ENCODE measurements at regions of chr4 and their contacts with region 1.

Region 1: GRCh38 chr4:26319467-26319948 is 1.3 kb upstream of the RBPJ start:
- DNase-seq: peak; percentile 99
- H3K4me3 ChIP-seq: peak overlapping the region; percentile 68 to 90 (median 86)
- H3K27ac ChIP-seq: peak overlapping the region; percentile 79
- H3K4me1 ChIP-seq: peaks cover 15% of the 10 kb centered on the region
- H3K27me3 ChIP-seq: no peaks in the 10 kb centered on the region
- CTCF ChIP-seq: peak in 1 of 2 donors; percentile 3

Region 2: GRCh38 chr4:25925486-25926201 is 393.9 kb before region 1 on chr4:
- CTCF ChIA-PET with region 1: no interaction called
- dilution Hi-C with region 1: no loop called
- in situ Hi-C with region 1: no loop called
- intact Hi-C with region 1: loop called (anchors 10 kb)
- DNase-seq: peak; percentile 20
- H3K4me3 ChIP-seq: no peak overlapping the region
- H3K27ac ChIP-seq: no peak overlapping the region
- H3K4me1 ChIP-seq: no peaks in the 10 kb centered on the region
- H3K27me3 ChIP-seq: no peaks in the 10 kb centered on the region
- CTCF ChIP-seq: peak; percentile 50 to 66

Region 3: DNA sequence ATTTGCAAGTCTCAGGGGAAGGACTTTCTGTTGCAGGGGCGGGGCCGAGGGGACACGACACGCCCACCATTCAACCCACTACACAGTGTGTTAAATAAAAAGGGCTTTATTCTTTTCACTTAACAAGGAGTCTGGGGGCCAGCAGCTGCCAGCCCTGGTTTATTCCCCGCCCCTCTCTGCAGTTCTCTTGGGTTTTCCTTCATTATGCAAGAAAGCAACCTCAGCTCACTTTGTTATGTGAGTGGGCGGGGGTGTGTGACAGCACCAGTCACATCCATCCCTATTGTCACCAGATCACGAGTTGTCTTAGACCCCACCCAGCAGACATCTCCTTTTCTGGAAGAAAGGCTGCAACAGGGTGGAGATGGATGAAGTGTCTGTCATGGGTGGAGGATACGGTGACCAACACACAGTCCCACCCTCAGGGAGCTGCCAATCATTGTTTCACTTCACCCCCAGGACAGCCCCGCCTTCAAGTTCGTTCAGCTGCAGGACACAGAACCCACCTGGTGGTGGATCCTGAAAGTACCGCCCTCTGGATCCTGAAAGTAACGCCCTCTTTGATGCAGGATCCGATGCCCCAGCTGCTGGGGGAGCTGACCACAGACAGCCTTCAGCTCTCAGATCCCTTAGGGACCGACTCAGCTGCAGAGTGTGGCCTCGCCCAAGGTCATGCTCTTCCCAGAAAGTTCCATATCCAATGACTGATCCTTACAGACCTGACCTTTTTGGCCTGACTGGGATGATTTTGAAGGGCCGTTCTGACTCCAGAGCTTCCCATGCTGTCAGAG is 325.9 kb before region 1 on chr4:
- CTCF ChIA-PET with region 1: no interaction called
- dilution Hi-C with region 1: no loop called
- in situ Hi-C with region 1: loop called in 1 of 2 experiments (anchors 10 kb)
- intact Hi-C with region 1: loop called (anchors 1 kb)
- DNase-seq: no peak
- H3K4me3 ChIP-seq: no peak overlapping the region
- H3K27ac ChIP-seq: no peak overlapping the region
- H3K4me1 ChIP-seq: no peaks in the 10 kb centered on the region
- H3K27me3 ChIP-seq: no peaks in the 10 kb centered on the region
- CTCF ChIP-seq: no peak

Region 4: GRCh38 chr4:26197018-26197779 is 122.3 kb before region 1 on chr4:
- CTCF ChIA-PET with region 1: no interaction called
- dilution Hi-C with region 1: no loop called
- in situ Hi-C with region 1: no loop called
- intact Hi-C with region 1: loop called (anchors 1 kb)
- DNase-seq: peak; percentile 96
- H3K4me3 ChIP-seq: no peak overlapping the region
- H3K27ac ChIP-seq: no peak overlapping the region
- H3K4me1 ChIP-seq: peaks cover 8% of the 10 kb centered on the region
- H3K27me3 ChIP-seq: peaks cover 21% of the 10 kb centered on the region
- CTCF ChIP-seq: no peak

Region 5: GRCh38 chr4:26281881-26282280 is 37.6 kb before region 1 on chr4:
- CTCF ChIA-PET with region 1: interaction called, 16 read pairs
- dilution Hi-C with region 1: no loop called
- in situ Hi-C with region 1: no loop called
- intact Hi-C with region 1: no loop called
- DNase-seq: no peak
- H3K4me3 ChIP-seq: no peak overlapping the region
- H3K27ac ChIP-seq: no peak overlapping the region
- H3K4me1 ChIP-seq: no peaks in the 10 kb centered on the region
- H3K27me3 ChIP-seq: peaks cover 3% of the 10 kb centered on the region
- CTCF ChIP-seq: no peak

Region 6: GRCh38 chr4:26397086-26397485 is 77.6 kb after region 1 on chr4:
- CTCF ChIA-PET with region 1: no interaction called
- dilution Hi-C with region 1: no loop called
- in situ Hi-C with region 1: loop called in 1 of 2 experiments (anchors 10 kb)
- intact Hi-C with region 1: no loop called
- DNase-seq: no peak
- H3K4me3 ChIP-seq: no peak overlapping the region
- H3K27ac ChIP-seq: no peak overlapping the region
- H3K4me1 ChIP-seq: no peaks in the 10 kb centered on the region
- H3K27me3 ChIP-seq: no peaks in the 10 kb centered on the region
- CTCF ChIP-seq: no peak